PC-3 (cell line): ENCODE measurements at regions of chr21 and their contacts with region 1.

Region 1: DNA sequence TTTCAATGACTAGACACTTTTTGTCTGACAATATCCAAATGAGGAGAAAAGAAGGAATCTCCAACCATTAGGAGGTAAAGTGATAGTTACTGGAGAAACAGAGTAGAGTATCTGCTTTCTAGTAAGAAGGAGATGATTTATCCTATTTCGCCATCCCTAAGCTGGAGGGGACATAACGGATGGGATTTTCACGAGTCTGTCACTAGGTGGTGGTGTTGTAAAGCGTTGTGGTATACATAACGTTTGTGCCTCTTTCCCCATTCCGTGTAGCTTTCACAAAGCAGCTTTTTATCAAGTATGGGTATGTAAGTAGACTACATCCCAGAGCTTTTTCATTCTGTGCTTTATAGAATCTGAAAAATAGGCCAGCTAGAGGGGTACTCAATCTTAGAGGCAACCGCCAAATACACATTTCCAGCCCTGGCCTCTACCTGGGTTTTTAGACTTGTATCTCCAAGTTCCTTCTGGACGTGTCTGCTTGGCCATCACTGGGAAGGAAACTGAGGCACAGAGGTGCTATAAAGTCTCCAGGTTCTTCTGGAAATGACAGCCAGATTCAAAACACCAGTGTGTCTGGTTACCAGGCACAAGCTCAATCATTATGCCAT is 33.3 kb upstream of the FAM3B start:
- DNase-seq: peak; percentile 90
- ATAC-seq: peak; percentile 99
- H3K4me3 ChIP-seq: no peak overlapping the region
- H3K27ac ChIP-seq: no peak overlapping the region
- H3K4me1 ChIP-seq: no peaks in the 10 kb centered on the region
- H3K27me3 ChIP-seq: no peaks in the 10 kb centered on the region
- CTCF ChIP-seq: peak; percentile 92

Region 2: GRCh38 chr21:41304068-41304720 is 20.9 kb after region 1 on chr21:
- CTCF ChIA-PET with region 1: no interaction called
- POLR2A ChIA-PET with region 1: no interaction called
- intact Hi-C with region 1: no loop called
- DNase-seq: no peak
- ATAC-seq: no peak
- H3K4me3 ChIP-seq: no peak overlapping the region
- H3K27ac ChIP-seq: no peak overlapping the region
- H3K4me1 ChIP-seq: no peaks in the 10 kb centered on the region
- H3K27me3 ChIP-seq: peaks cover 39% of the 10 kb centered on the region; the same call in 1 of the 2 replicates
- CTCF ChIP-seq: no peak

Region 3: GRCh38 chr21:41345934-41346685 is 62.8 kb after region 1 on chr21:
- CTCF ChIA-PET with region 1: interaction called, 3 read pairs
- POLR2A ChIA-PET with region 1: interaction called, 3 read pairs
- intact Hi-C with region 1: loop called (anchors 5 kb)
- DNase-seq: peak; percentile 91
- ATAC-seq: peak; percentile 97
- H3K4me3 ChIP-seq: peak overlapping the region; percentile 48
- H3K27ac ChIP-seq: peak overlapping the region; percentile 38; the same call in 1 of the 2 replicates
- H3K4me1 ChIP-seq: peaks cover 18% of the 10 kb centered on the region
- H3K27me3 ChIP-seq: peaks cover 29% of the 10 kb centered on the region; the same call in 1 of the 2 replicates
- CTCF ChIP-seq: no peak

Region 4: GRCh38 chr21:41361786-41362604 is 78.7 kb after region 1 on chr21 and contains the start of gene MX2:
- CTCF ChIA-PET with region 1: interaction called, 31 read pairs
- POLR2A ChIA-PET with region 1: no interaction called
- intact Hi-C with region 1: loop called (anchors 1 kb)
- DNase-seq: peak; percentile 48
- ATAC-seq: peak; percentile 25
- H3K4me3 ChIP-seq: peak within 1 kb of the TSS; percentile 25; the same call in 1 of the 2 replicates
- H3K27ac ChIP-seq: no peak within 1 kb of the TSS
- H3K4me1 ChIP-seq: peaks cover 9% of the 10 kb centered on the region
- H3K27me3 ChIP-seq: peaks cover 4% of the 10 kb centered on the region
- CTCF ChIP-seq: no peak
- total RNA-seq, gene MX2: 0.15 and 0.46 TPM in 2 replicates

Region 5: DNA sequence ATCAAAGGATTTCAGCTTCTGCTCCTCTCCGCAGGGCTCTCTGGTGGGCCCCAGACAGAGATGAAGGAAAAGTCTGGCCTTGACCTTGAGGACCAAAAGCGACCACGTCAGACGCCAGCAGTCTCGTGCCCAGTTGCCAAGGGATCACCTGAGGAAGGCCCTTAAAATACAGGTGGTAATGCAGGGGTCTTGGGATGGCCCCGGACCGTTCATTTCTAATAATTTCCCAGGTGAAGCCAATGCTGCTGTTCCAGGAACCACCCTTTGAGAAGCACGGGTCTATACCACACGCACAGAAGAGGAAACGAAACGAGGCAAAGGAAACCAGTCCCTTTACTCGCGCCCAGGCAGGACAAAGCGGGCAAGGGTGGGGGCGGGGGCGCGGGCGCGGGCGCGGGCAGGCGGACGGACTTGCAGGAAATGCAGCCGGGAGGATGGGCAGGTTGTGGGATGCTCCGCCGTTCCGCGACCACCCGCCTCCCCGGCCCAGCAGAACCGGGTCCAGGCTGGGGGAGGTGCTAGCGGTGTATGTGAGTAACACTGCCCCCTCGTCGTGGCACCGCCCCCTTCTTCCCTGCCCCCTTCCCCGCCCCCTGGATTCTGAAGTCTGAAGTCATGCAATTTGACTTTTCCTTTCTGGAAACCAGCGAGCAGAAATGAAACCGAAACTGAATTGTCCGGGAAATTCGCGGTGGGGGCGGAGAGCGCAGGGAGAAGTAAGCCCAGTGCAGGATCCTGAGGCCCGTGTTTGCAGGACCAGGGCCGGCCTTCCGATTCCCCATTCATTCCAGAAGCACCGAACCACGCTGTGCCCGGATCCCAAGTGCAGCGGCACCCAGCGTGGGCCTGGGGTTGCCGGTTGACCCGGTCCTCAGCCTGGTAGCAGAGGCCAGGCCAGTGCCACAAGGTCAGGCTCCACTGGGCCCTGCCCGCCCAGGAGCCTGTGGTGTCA is 136.9 kb after region 1 on chr21:
- CTCF ChIA-PET with region 1: no interaction called
- POLR2A ChIA-PET with region 1: no interaction called
- intact Hi-C with region 1: loop called (anchors 10 kb)
- DNase-seq: peak; percentile 89
- ATAC-seq: peak; percentile 90
- H3K4me3 ChIP-seq: peak overlapping the region; percentile 70
- H3K27ac ChIP-seq: peak overlapping the region; percentile 54
- H3K4me1 ChIP-seq: no peaks in the 10 kb centered on the region; the same call in none of the 2 replicates
- H3K27me3 ChIP-seq: no peaks in the 10 kb centered on the region
- CTCF ChIP-seq: no peak

Region 6: DNA sequence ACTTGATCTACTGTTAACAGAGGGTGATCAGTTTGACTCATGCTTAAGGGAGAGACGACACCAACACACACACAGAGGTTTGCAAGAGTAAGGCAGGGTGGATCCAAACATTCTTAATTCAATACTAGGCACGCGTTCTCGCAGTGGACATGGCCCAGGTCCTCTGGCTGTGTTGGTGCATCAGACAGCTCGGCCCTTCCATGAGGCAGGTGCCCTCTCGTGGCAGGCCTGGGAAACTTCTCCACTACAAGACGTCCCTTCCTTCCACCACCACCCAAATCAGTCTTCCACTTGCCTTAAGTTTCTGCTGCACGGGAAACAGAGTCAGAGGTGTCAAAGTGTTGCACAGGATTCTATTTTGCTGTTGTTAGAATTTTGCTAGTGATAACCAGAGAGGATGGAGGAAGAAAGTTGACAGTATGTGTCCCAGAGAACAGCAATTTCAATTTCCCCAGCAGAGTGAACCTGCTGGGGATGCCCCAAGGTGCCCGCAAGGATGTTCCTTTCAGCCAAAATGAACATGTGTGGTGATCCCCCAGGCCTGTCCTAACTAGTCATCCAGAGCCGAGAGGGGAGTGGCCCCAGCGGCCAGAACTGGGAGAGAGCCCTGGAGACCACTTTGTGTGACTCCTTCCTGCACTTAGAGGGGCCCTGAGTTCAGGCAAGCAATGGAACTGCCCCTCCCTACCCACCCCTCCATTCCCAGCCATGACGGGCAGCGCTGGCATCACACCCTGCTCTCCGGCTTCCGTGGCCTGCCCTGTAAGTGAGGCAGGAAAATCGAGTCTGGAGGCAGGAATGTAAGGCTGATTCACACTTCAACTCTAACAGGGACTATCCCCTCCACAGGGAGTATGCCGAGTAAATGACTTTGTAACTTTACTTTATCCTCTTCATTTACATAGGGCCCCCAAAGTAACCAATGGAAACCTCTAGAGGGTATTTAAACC is 177.5 kb after region 1 on chr21:
- CTCF ChIA-PET with region 1: interaction called, 17 read pairs
- POLR2A ChIA-PET with region 1: no interaction called
- intact Hi-C with region 1: loop called (anchors 1 kb)
- DNase-seq: peak; percentile 73
- ATAC-seq: peak; percentile 90
- H3K4me3 ChIP-seq: no peak overlapping the region
- H3K27ac ChIP-seq: no peak overlapping the region
- H3K4me1 ChIP-seq: 0 out of 2 replicates have a peak, but pooled peaks cover 4% of the 10 kb centered on the region
- H3K27me3 ChIP-seq: no peaks in the 10 kb centered on the region
- CTCF ChIP-seq: peak; percentile 91

Region 7: DNA sequence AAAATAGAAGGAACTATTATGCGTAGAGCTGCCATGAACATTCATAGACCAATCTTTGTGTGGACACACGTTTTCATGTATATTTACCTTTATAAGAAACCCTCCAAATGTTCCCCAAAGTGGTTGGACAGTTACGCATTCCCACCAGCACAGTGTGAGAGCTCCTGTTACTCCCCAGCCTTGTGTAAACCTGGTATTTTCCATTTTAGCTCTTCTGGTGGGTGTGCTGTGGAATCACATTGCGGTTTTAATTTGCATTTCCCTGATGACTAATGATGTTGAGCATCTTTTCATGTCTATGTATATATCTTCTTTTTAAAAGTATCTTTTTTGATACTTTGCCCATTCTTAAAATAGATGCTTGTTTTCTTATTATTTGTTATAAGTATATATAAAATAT is 1117.2 kb after region 1 on chr21:
- CTCF ChIA-PET with region 1: no interaction called
- POLR2A ChIA-PET with region 1: interaction called, 12 read pairs
- intact Hi-C with region 1: no loop called
- DNase-seq: peak; percentile 23
- ATAC-seq: peak; percentile 32
- H3K4me3 ChIP-seq: no peak overlapping the region
- H3K27ac ChIP-seq: no peak overlapping the region
- H3K4me1 ChIP-seq: peaks cover 19% of the 10 kb centered on the region
- H3K27me3 ChIP-seq: no peaks in the 10 kb centered on the region
- CTCF ChIP-seq: no peak